Activated CD4-positive, alpha-beta T cell treated with anti-CD3 and anti-CD28 coated beads, Interleukin-2, amount 10 ng/mL, durations not matched to agents 24 days and 14 days (primary cell): ENCODE measurements at regions of chr12 and their contacts with region 1.

Region 1: DNA sequence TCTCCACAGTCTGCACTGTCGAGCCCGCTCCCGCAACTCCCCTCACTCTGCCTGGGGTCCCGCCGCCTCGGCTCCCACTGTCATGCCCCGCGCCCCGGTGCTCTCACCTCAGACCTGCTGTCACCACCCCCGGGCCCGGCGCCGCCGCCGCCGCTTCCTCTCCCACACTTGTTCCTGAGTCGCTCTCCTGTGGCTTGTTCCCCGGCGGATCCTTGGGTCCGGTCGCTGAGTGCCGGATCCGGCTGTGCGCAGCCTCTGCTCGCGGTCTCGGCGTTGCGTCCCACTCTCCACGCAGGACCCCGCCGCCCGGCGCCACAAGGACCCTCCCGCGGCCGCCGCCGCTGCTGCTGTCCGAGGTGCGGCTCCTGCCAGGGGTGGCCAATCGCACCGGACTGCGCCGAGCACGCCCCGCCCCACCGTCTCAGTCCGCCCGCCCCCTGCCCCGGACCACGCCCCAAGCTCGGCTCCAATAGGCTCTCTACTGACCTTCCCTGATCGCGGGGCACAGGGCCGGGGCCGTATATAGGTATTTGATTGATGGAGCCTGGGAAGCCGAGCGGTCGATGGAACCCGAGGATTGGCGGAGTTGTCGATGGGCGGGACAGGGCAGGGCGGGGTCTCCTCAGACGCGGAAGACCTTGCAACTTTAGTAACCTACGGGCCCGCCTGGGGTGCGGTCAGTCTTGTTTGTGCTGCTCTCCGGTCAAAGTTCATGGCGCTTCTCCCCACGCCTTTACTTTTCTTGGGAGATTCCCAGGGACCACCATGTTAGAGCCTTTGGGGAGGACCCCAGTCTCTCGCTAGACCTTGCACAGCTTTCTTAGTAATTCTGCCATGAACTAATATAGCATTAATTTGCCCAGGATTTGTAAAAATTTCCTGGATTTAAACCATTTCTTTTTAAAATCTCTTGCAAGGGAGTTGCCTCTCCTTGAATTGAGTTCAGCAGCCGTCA is at the start of gene TAOK3:
- DNase-seq: peak; percentile 98
- H3K4me3 Mint-ChIP-seq: peak within 1 kb of the TSS; percentile 97
- H3K27ac Mint-ChIP-seq: peak within 1 kb of the TSS; percentile 92
- H3K4me1 Mint-ChIP-seq: peaks cover 44% of the 10 kb centered on the region
- H3K27me3 Mint-ChIP-seq: peaks cover 15% of the 10 kb centered on the region
- total RNA-seq, gene TAOK3: 51.8 and 53.4 TPM in 2 replicates

Region 2: GRCh38 chr12:117190210-117190781 is 1182.5 kb before region 1 on chr12 and contains the start of gene FBXO21:
- intact Hi-C with region 1: loop called (anchors 10 kb)
- DNase-seq: peak; percentile 98
- H3K4me3 Mint-ChIP-seq: peak within 1 kb of the TSS; percentile 94
- H3K27ac Mint-ChIP-seq: peak within 1 kb of the TSS; percentile 75
- H3K4me1 Mint-ChIP-seq: peaks cover 23% of the 10 kb centered on the region
- H3K27me3 Mint-ChIP-seq: peaks cover 15% of the 10 kb centered on the region
- total RNA-seq, gene FBXO21: 28.0 and 28.1 TPM in 2 replicates

Region 3: GRCh38 chr12:118016424-118017264 is 356.2 kb before region 1 on chr12 and contains the start of gene RFC5:
- intact Hi-C with region 1: loop called (anchors 2 kb)
- DNase-seq: peak; percentile 99
- H3K4me3 Mint-ChIP-seq: peak within 1 kb of the TSS; percentile 98
- H3K27ac Mint-ChIP-seq: peak within 1 kb of the TSS; percentile 94
- H3K4me1 Mint-ChIP-seq: peaks cover 17% of the 10 kb centered on the region
- H3K27me3 Mint-ChIP-seq: peaks cover 7% of the 10 kb centered on the region
- total RNA-seq, gene RFC5: 82.9 and 84.4 TPM in 2 replicates

Region 4: GRCh38 chr12:118120579-118121363 is 252.0 kb before region 1 on chr12:
- intact Hi-C with region 1: loop called (anchors 1 kb)
- DNase-seq: peak; percentile 87
- H3K4me3 Mint-ChIP-seq: no peak overlapping the region
- H3K27ac Mint-ChIP-seq: peak overlapping the region; percentile 69
- H3K4me1 Mint-ChIP-seq: peaks cover 5% of the 10 kb centered on the region
- H3K27me3 Mint-ChIP-seq: no peaks in the 10 kb centered on the region

Region 5: DNA sequence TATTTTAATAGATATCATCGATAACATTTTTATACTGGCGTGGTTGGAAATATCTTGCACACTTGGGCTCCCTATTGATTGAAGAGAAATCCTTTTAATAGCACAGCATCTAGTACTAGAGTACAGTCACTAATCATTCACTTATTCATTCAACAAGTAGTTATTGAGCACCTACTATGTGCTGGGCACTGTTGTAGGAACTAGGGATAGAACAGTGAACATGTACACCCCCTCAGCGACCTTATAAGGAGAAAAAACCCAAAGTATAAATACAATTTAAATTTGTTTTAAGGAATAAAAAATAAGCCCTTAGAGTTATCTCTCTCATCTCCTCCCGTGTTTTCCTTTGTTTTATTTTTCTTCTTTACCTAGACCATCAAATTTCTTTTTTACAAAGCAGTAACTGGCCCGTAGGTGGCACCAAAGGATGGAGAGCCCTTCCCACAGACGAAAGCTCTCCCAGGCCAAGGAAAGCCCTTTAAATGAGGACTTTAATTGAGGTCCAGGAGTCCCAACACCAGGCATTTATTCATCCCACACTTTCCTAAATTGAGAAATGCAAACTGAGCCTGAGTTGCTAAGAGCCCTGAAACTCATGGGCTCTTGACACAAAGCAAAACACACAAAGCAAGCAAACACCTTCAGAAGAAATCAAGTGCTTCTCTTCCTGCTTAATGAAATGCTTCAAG is 207.9 kb before region 1 on chr12:
- intact Hi-C with region 1: loop called (anchors 1 kb)
- DNase-seq: no peak
- H3K4me3 Mint-ChIP-seq: no peak overlapping the region
- H3K27ac Mint-ChIP-seq: no peak overlapping the region
- H3K4me1 Mint-ChIP-seq: peaks cover 16% of the 10 kb centered on the region
- H3K27me3 Mint-ChIP-seq: no peaks in the 10 kb centered on the region

Region 6: GRCh38 chr12:118307069-118307954 is 65.5 kb before region 1 on chr12:
- intact Hi-C with region 1: loop called (anchors 1 kb)
- DNase-seq: peak; percentile 61
- H3K4me3 Mint-ChIP-seq: peak overlapping the region; percentile 62
- H3K27ac Mint-ChIP-seq: peak overlapping the region; percentile 82
- H3K4me1 Mint-ChIP-seq: peaks cover 21% of the 10 kb centered on the region
- H3K27me3 Mint-ChIP-seq: no peaks in the 10 kb centered on the region